CD14-positive monocyte (primary cell): ENCODE measurements at regions of chr21 and their contacts with region 1.

Region 1: GRCh38 chr21:28992526-28993292 is at the start of gene LTN1:
- DNase-seq: peak; percentile 99 to 100 (median 100)
- H3K4me3 ChIP-seq: peak within 1 kb of the TSS; percentile 87 to 97 (median 93)
- H3K4me3 Mint-ChIP-seq: peak within 1 kb of the TSS; percentile 94 to 99
- H3K27ac ChIP-seq: peak within 1 kb of the TSS; percentile 84 to 86
- H3K27ac Mint-ChIP-seq: peak within 1 kb of the TSS; percentile 92 to 98 (median 97)
- H3K4me1 ChIP-seq: peaks cover 13 to 21% of the 10 kb centered on the region in 2 donors
- H3K4me1 Mint-ChIP-seq: peaks cover 22% of the 10 kb centered on the region
- H3K27me3 ChIP-seq: no peaks in the 10 kb centered on the region
- H3K27me3 Mint-ChIP-seq: no peaks in the 10 kb centered on the region
- CTCF ChIP-seq: no peak
- polyA plus RNA-seq, gene LTN1: 6.0 to 14.0 (median 11.7) TPM

Region 2: DNA sequence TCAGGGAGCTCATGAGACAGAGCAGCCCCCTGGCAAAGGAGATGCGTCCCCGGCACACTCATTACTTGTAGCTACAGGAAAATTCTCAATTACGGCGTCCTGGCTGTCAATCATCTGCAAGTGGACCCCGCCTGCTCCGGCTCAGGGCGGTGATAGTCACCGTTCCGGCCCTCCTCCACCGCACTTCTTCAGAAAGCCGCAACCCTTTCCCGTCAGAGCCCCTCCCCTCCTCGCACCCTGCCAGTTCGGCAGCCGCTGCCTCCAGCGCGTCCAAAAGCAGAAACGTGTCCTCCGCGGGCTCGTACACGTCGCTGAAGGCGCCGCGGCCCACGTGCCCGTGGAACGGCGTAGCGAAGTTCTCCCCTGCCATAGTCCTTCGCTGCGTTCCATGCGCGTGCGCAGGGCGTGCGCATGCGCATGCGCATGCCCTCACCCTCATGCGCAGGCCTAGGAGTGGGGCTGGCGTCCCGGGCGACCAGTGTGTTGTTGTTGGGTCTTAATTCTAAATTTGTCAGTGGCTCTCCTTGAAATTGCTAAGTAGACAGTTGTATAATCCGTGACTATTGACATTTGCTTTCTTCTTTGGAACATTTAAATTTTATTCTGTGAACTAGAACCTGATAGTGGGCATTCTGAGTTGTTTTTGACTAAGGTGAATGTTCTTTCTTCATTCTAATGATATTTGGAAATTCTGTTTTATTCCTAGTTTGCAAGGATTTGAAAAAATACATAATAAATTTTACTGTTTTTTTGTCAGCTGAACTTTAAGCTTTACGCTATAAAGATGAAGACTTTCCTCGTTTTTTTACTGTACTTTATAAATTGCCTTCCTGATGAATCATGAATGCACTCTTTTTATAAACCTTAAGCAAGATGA is 107.5 kb before region 1 on chr21:
- intact Hi-C with region 1: loop called in 1 of 2 experiments (anchors 5 kb)
- DNase-seq: peak; percentile 90 to 94 (median 94)
- H3K4me3 ChIP-seq: peak overlapping the region; percentile 71 to 84 (median 78)
- H3K4me3 Mint-ChIP-seq: peak overlapping the region; percentile 90 to 96
- H3K27ac ChIP-seq: peak overlapping the region; percentile 85 to 92
- H3K27ac Mint-ChIP-seq: peak overlapping the region; percentile 93 to 97 (median 95)
- H3K4me1 ChIP-seq: peaks cover 6 to 14% of the 10 kb centered on the region in 2 donors
- H3K4me1 Mint-ChIP-seq: peaks cover 13% of the 10 kb centered on the region
- H3K27me3 ChIP-seq: no peaks in the 10 kb centered on the region
- H3K27me3 Mint-ChIP-seq: peaks cover 2 to 11% (median 5%) of the 10 kb centered on the region in 3 donors
- CTCF ChIP-seq: no peak

Region 3: GRCh38 chr21:28975397-28975796 is 17.3 kb before region 1 on chr21:
- intact Hi-C with region 1: no loop called
- DNase-seq: no peak
- H3K4me3 ChIP-seq: no peak overlapping the region
- H3K4me3 Mint-ChIP-seq: no peak overlapping the region
- H3K27ac ChIP-seq: no peak overlapping the region
- H3K27ac Mint-ChIP-seq: no peak overlapping the region
- H3K4me1 ChIP-seq: no peaks in the 10 kb centered on the region
- H3K4me1 Mint-ChIP-seq: no peaks in the 10 kb centered on the region
- H3K27me3 ChIP-seq: no peaks in the 10 kb centered on the region
- H3K27me3 Mint-ChIP-seq: no peaks in the 10 kb centered on the region
- CTCF ChIP-seq: no peak

Region 4: GRCh38 chr21:29024474-29025327 is 32.0 kb after region 1 on chr21 and contains the start of gene USP16:
- intact Hi-C with region 1: loop called (anchors 2 to 5 kb)
- DNase-seq: peak; percentile 96
- H3K4me3 ChIP-seq: peak within 1 kb of the TSS; percentile 78 to 89 (median 83)
- H3K4me3 Mint-ChIP-seq: peak within 1 kb of the TSS; percentile 98 to 99
- H3K27ac ChIP-seq: peak within 1 kb of the TSS; percentile 97 to 99
- H3K27ac Mint-ChIP-seq: peak within 1 kb of the TSS; percentile 99 to 100 (median 100)
- H3K4me1 ChIP-seq: peaks cover 14 to 22% of the 10 kb centered on the region in 2 donors
- H3K4me1 Mint-ChIP-seq: peaks cover 27% of the 10 kb centered on the region
- H3K27me3 ChIP-seq: no peaks in the 10 kb centered on the region
- H3K27me3 Mint-ChIP-seq: peaks cover 0 to 2% (median 0%) of the 10 kb centered on the region in 3 donors
- CTCF ChIP-seq: no peak
- polyA plus RNA-seq, gene USP16: 11.6 to 23.6 (median 16.2) TPM

Region 5: DNA sequence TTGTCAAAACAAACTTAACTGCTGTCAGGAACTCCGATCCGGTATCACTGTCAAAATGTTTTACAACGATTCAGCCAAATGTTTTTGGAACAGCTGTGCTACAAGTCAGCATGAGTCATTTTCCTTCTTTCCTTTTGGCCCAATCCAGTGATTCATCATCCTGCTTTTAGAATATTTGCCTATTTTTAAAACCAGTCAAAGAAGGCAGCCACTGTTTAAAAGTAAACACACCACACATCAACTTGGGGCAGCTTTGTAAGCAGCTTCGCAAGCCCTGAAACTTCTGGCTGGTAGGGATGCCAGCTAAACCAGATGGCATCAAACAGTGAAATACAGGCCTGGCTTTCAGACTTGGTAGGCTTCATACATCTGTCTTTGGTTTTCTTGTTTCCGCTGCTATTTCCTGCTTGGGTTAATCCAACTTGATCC is 152.7 kb after region 1 on chr21:
- intact Hi-C with region 1: no loop called
- DNase-seq: peak in 2 of 3 donors; percentile 64 to 67
- H3K4me3 ChIP-seq: no peak overlapping the region
- H3K4me3 Mint-ChIP-seq: no peak overlapping the region
- H3K27ac ChIP-seq: peak overlapping the region in 1 of 2 donors; percentile 52
- H3K27ac Mint-ChIP-seq: peak overlapping the region in 6 of 7 donors; percentile 25 to 80 (median 50)
- H3K4me1 ChIP-seq: peaks cover 19 to 21% of the 10 kb centered on the region in 2 donors
- H3K4me1 Mint-ChIP-seq: peaks cover 16% of the 10 kb centered on the region
- H3K27me3 ChIP-seq: no peaks in the 10 kb centered on the region
- H3K27me3 Mint-ChIP-seq: peaks cover 0 to 1% (median 0%) of the 10 kb centered on the region in 3 donors
- CTCF ChIP-seq: no peak